HCT116 (cell line): ENCODE measurements at regions of chr7 and their contacts with region 1.

Region 1: DNA sequence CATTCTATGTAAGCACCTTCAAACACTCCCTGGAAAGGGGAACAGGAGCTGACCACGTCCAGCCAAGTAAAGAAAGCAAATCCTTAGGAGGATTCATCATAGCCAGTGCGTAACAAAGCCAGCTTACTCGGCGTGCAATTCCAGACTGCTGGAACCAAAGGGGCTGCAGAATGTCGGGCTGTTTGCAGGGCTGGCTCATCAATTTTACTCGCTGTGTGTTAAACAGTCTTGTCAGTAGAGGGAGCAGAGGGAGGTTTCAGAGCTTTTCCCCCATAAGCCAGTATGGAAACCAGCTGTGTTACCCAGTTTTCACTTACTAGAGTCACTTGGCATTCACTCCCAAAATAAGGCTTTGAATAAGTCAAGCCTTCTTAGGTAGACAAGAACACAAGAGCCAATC is 127.1 kb downstream of the KMT2E start:
- DNase-seq: peak; percentile 8
- ATAC-seq: peak; percentile 79
- H3K4me3 ChIP-seq: no peak overlapping the region
- H3K27ac ChIP-seq: no peak overlapping the region
- H3K4me1 ChIP-seq: peaks cover 0 to 9% of the 10 kb centered on the region in 2 experiments; a peak in 1 of 4 replicates
- H3K27me3 ChIP-seq: no peaks in the 10 kb centered on the region
- CTCF ChIP-seq: peak; percentile 27 to 45 (median 40); a peak in 3 of 6 replicates
- POLR2A ChIP-seq: no peak
- RAD21 ChIP-seq: peak; percentile 53

Region 2: DNA sequence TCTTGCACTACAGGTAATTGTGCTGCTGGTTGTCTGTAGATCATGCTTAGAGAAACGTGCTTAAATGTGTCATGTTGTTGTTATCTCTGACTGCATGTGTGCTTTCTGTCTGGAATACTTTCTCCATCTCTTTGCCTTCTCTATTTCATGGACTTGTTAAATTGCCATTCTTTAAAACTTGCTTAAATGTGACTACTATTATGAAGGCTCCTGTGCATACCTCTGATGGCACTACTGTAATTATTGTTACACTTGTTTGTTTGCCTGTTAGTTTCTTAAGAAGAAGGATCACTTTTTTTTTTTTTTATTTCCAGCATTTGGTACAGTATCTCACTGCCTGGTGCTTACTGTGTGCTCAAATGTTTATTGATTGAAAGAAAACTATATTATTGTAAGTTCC is 85.4 kb before region 1 on chr7:
- CTCF ChIA-PET with region 1: no interaction called
- POLR2A ChIA-PET with region 1: no interaction called
- RAD21 ChIA-PET with region 1: no interaction called
- intact Hi-C with region 1: no loop called
- DNase-seq: no peak
- ATAC-seq: no peak
- H3K4me3 ChIP-seq: no peak overlapping the region
- H3K27ac ChIP-seq: no peak overlapping the region
- H3K4me1 ChIP-seq: no peaks in the 10 kb centered on the region
- H3K27me3 ChIP-seq: no peaks in the 10 kb centered on the region
- CTCF ChIP-seq: no peak
- POLR2A ChIP-seq: no peak
- RAD21 ChIP-seq: no peak

Region 3: GRCh38 chr7:105336009-105336408 is 194.9 kb after region 1 on chr7:
- CTCF ChIA-PET with region 1: no interaction called
- POLR2A ChIA-PET with region 1: no interaction called
- RAD21 ChIA-PET with region 1: no interaction called
- intact Hi-C with region 1: loop called (anchors 2 kb)
- DNase-seq: no peak
- ATAC-seq: no peak
- H3K4me3 ChIP-seq: no peak overlapping the region
- H3K27ac ChIP-seq: no peak overlapping the region
- H3K4me1 ChIP-seq: peaks cover 3 to 4% of the 10 kb centered on the region in 2 experiments; a peak in 2 of 4 replicates
- H3K27me3 ChIP-seq: no peaks in the 10 kb centered on the region
- CTCF ChIP-seq: peak; percentile 7 to 37 (median 33); a peak in 2 of 6 replicates
- POLR2A ChIP-seq: no peak
- RAD21 ChIP-seq: peak; percentile 66